ENCODE measurements at regions of chr1 and their contacts with region 1.

Region 1: GRCh38 chr1:12619792-12620487 is 1.9 kb upstream of the DHRS3 start:
- DNase-seq: peak; percentile 87
- ATAC-seq: peak; percentile 52
- H3K4me3 Mint-ChIP-seq: peak overlapping the region; percentile 95
- H3K27ac Mint-ChIP-seq: peak overlapping the region; percentile 64
- H3K4me1 Mint-ChIP-seq: peaks cover 50% of the 10 kb centered on the region
- H3K27me3 Mint-ChIP-seq: peaks cover 8% of the 10 kb centered on the region

Region 2: GRCh38 chr1:12301518-12302237 is 318.3 kb before region 1 on chr1:
- CTCF ChIA-PET with region 1: interaction called, 13 read pairs
- DNase-seq: no peak
- ATAC-seq: no peak
- H3K4me3 Mint-ChIP-seq: no peak overlapping the region
- H3K27ac Mint-ChIP-seq: no peak overlapping the region
- H3K4me1 Mint-ChIP-seq: peaks cover 24% of the 10 kb centered on the region
- H3K27me3 Mint-ChIP-seq: no peaks in the 10 kb centered on the region

Region 3: DNA sequence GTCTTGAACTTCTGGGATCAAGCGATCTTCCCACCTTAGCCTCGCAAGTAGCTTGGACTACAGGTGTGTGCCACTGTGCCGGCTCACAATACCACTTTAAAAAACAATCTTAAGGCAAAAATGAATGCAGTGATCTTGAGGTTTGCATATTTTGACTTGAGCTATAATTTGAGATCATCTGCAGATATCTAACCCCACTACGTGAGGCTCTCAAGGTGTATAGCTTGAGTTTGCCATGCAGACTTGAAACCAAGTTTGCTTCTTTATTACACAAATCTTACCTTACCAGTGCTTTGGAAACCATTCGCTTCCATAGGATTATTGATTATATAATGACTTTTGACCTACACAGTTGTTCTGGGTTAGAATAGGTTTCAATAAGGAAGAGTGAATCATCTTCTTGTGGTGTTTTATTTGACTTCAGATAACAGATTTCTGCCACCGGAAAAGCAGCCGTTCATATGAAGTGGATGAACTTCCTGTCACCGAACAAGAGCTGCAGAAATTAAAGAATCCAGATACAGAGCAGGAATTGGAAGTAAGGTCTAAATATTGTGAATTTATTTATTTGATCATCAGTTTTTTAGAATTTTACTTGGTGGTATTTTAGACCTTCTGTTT is 235.0 kb before region 1 on chr1:
- CTCF ChIA-PET with region 1: interaction called, 11 read pairs
- DNase-seq: peak; percentile 52
- ATAC-seq: peak; percentile 55
- H3K4me3 Mint-ChIP-seq: no peak overlapping the region
- H3K27ac Mint-ChIP-seq: no peak overlapping the region
- H3K4me1 Mint-ChIP-seq: peaks cover 32% of the 10 kb centered on the region
- H3K27me3 Mint-ChIP-seq: no peaks in the 10 kb centered on the region

Region 4: DNA sequence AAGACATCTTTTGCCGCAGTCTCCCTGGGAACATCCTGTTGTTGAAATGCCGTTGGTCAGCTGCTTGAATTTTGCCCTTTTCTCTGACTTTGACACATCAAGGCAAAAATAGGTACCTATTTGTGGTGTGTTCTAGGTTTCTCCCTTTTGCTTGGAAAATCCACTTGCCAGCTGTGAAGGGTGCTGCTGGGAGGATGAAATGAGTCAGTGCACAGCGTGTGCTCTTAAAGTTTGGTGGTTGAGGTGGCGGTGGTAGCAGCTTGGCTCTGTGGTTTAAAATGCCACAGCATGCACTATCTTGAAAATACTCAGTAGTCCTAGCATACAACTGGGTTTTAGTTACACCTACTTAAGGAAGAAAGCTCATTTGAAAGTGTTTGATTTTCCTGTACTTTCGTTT is 185.8 kb before region 1 on chr1:
- CTCF ChIA-PET with region 1: interaction called, 38 read pairs
- DNase-seq: peak; percentile 89
- ATAC-seq: peak; percentile 37
- H3K4me3 Mint-ChIP-seq: peak overlapping the region; percentile 34
- H3K27ac Mint-ChIP-seq: peak overlapping the region; percentile 88
- H3K4me1 Mint-ChIP-seq: peaks cover 63% of the 10 kb centered on the region
- H3K27me3 Mint-ChIP-seq: no peaks in the 10 kb centered on the region

Region 5: GRCh38 chr1:12511516-12512468 is 108.1 kb before region 1 on chr1:
- CTCF ChIA-PET with region 1: interaction called, 27 read pairs
- DNase-seq: no peak
- ATAC-seq: no peak
- H3K4me3 Mint-ChIP-seq: peak overlapping the region; percentile 36
- H3K27ac Mint-ChIP-seq: peak overlapping the region; percentile 69
- H3K4me1 Mint-ChIP-seq: peaks cover 28% of the 10 kb centered on the region
- H3K27me3 Mint-ChIP-seq: no peaks in the 10 kb centered on the region

Region 6: DNA sequence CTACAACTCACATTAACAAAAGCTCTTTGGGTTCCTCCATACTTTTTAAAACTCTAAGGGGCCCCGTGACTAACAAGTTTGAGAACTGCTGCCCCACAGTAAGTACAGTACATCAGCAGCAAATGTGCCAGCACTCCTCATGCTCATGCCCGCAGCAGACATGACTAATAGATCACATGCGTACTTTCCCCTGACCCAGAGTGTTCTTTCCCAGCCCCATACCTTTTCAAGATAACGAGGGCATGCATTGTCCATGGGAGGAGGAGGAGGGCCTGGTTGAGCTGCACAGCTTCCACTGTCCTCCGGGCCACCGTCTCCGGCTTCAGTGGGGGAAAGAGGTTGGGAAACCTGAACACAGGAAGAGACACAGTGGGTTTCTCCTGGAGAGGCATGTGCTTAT is 47.4 kb before region 1 on chr1:
- CTCF ChIA-PET with region 1: no interaction called
- DNase-seq: no peak
- ATAC-seq: no peak
- H3K4me3 Mint-ChIP-seq: no peak overlapping the region
- H3K27ac Mint-ChIP-seq: no peak overlapping the region
- H3K4me1 Mint-ChIP-seq: no peaks in the 10 kb centered on the region
- H3K27me3 Mint-ChIP-seq: no peaks in the 10 kb centered on the region

Region 7: DNA sequence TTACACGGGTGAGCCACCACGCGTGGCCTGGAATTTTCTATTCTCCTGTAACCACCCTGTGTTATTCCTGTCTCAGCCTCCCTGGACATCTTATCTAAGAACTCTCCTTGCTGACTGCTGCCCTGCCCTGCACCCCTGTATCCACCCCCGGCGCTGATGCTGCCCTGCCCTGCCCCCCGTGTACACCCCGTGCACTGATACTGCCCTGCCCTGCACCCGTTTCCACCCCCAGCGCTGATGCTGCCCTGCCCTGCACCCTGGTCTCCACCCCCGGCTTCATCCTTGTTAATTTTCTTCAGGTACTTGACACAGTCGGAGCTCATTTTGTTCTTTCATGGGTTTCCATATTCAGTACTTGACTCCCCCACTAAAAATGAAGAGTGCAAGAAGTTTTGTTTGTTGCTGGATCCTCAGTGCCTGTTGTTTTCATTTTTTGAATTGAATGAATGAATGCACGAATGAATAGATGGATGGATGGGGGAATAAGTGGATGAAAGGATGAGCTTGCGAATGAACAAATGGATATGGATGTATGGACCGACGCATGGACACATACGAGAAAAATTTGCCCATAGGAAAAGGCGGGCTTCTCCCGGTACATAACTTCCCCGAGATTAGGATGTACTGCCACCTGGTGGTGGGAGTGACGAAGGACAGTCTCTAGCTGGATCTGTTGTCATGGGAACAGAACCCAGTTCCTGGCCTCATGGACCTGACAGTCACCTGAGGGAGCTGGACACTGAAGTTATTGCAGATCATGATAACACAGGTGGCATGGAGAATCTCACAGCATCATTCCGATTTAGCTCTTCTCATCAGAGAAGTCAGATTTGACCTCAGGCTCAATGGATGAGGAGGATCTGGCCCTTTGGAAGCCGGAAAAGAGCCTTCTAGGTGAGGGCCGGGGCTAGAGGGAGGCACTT is 38.9 kb after region 1 on chr1:
- CTCF ChIA-PET with region 1: interaction called, 63 read pairs
- DNase-seq: peak; percentile 77
- ATAC-seq: peak; percentile 77
- H3K4me3 Mint-ChIP-seq: peak overlapping the region; percentile 11
- H3K27ac Mint-ChIP-seq: no peak overlapping the region
- H3K4me1 Mint-ChIP-seq: peaks cover 6% of the 10 kb centered on the region
- H3K27me3 Mint-ChIP-seq: peaks cover 8% of the 10 kb centered on the region

Measured in activated CD8-positive, alpha-beta memory T cell treated with anti-CD3 and anti-CD28 coated beads, Interleukin-2, amount 10 ng/mL, durations not matched to agents 7 days and 5 days (primary cell).